IMR-90 (cell line): ENCODE measurements at regions of chr14 and their contacts with region 1.

Region 1: DNA sequence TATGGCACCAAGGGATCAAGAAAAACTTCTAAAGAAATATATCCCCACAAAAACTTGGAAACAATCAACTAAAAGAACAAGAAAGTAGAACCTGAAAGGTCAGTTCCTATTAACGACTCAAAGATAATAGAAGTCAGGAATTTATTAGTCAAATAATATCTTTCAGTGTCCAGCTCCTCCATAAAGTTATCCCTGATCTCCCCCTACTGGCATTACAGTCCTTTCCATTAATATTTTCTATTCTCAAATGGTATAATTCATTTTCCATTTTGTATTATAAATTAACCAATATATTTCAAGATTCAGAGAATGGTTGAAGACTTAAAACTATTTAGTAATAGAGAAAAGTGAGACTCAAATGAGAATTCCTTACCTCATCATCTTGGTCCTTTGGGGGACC is 11.6 kb upstream of the SUPT16H start:
- DNase-seq: no peak
- ATAC-seq: no peak
- H3K4me3 ChIP-seq: no peak overlapping the region
- H3K27ac ChIP-seq: no peak overlapping the region
- H3K4me1 ChIP-seq: no peaks in the 10 kb centered on the region
- H3K27me3 ChIP-seq: no peaks in the 10 kb centered on the region
- CTCF ChIP-seq: peak; percentile 11; the same call in 1 of the 2 replicates
- POLR2A ChIP-seq: no peak
- RAD21 ChIP-seq: no peak

Region 2: DNA sequence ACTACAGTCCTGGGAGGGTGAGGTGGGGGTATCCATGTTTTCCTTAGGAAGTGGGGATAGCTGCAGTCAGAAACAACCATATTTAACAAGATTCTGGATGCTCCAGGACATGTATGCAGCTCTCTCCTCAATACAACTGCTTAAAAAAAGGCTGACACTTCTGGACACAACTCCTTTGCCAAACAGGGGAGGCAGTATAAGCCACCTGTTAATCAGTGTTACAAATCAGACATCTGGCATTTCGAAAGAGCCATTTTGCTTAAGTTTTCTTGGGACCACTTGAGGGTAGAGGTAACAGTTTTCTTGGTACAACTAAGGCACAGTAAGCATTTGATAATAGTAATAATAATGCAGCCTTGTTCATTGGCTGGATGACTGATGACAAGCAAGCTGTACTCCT is 68.5 kb before region 1 on chr14:
- CTCF ChIA-PET with region 1: no interaction called
- POLR2A ChIA-PET with region 1: no interaction called
- dilution Hi-C with region 1: no loop called
- in situ Hi-C with region 1: no loop called
- intact Hi-C with region 1: no loop called
- DNase-seq: no peak
- ATAC-seq: no peak
- H3K4me3 ChIP-seq: no peak overlapping the region
- H3K27ac ChIP-seq: no peak overlapping the region
- H3K4me1 ChIP-seq: no peaks in the 10 kb centered on the region
- H3K27me3 ChIP-seq: peaks cover 30% of the 10 kb centered on the region
- CTCF ChIP-seq: no peak
- POLR2A ChIP-seq: no peak
- RAD21 ChIP-seq: no peak

Region 3: GRCh38 chr14:21431126-21431525 is 35.7 kb after region 1 on chr14:
- CTCF ChIA-PET with region 1: no interaction called
- POLR2A ChIA-PET with region 1: no interaction called
- dilution Hi-C with region 1: no loop called
- in situ Hi-C with region 1: no loop called
- intact Hi-C with region 1: loop called (anchors 5 kb)
- DNase-seq: no peak
- ATAC-seq: no peak
- H3K4me3 ChIP-seq: no peak overlapping the region
- H3K27ac ChIP-seq: no peak overlapping the region
- H3K4me1 ChIP-seq: no peaks in the 10 kb centered on the region
- H3K27me3 ChIP-seq: no peaks in the 10 kb centered on the region
- CTCF ChIP-seq: no peak
- POLR2A ChIP-seq: no peak
- RAD21 ChIP-seq: no peak

Region 4: GRCh38 chr14:21614240-21614639 is 218.8 kb after region 1 on chr14:
- CTCF ChIA-PET with region 1: no interaction called
- POLR2A ChIA-PET with region 1: no interaction called
- dilution Hi-C with region 1: no loop called
- in situ Hi-C with region 1: no loop called
- intact Hi-C with region 1: no loop called
- DNase-seq: no peak
- ATAC-seq: no peak
- H3K4me3 ChIP-seq: no peak overlapping the region
- H3K27ac ChIP-seq: no peak overlapping the region
- H3K4me1 ChIP-seq: no peaks in the 10 kb centered on the region
- H3K27me3 ChIP-seq: no peaks in the 10 kb centered on the region; the same call in 1 of the 2 replicates
- CTCF ChIP-seq: no peak
- POLR2A ChIP-seq: no peak
- RAD21 ChIP-seq: no peak

Region 5: DNA sequence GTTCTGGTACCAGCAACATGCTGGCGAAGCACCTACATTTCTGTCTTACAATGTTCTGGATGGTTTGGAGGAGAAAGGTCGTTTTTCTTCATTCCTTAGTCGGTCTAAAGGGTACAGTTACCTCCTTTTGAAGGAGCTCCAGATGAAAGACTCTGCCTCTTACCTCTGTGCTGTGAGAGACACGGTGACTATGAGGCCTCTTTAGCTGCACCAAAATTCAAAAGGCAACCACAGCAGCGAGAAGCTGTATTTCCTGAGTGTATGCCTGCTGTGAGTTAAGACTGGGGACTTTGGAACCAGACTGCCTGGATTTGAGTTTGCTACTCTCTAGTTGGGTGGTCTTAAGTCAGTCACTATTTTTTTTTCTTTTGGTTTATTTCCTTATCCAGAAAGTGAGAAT is 248.0 kb after region 1 on chr14:
- CTCF ChIA-PET with region 1: no interaction called
- POLR2A ChIA-PET with region 1: no interaction called
- dilution Hi-C with region 1: no loop called
- in situ Hi-C with region 1: no loop called
- intact Hi-C with region 1: no loop called
- DNase-seq: no peak
- ATAC-seq: no peak
- H3K4me3 ChIP-seq: no peak overlapping the region
- H3K27ac ChIP-seq: no peak overlapping the region
- H3K4me1 ChIP-seq: no peaks in the 10 kb centered on the region
- H3K27me3 ChIP-seq: peaks cover 1% of the 10 kb centered on the region; the same call in 1 of the 2 replicates
- CTCF ChIP-seq: no peak
- POLR2A ChIP-seq: no peak
- RAD21 ChIP-seq: no peak